ENCODE measurements at regions of chr12 and their contacts with region 1.

Region 1: GRCh38 chr12:76455582-76456345 is 103.8 kb downstream of the OSBPL8 start:
- DNase-seq: peak; percentile 24
- H3K4me3 Mint-ChIP-seq: no peak overlapping the region
- H3K27ac Mint-ChIP-seq: no peak overlapping the region
- H3K4me1 Mint-ChIP-seq: peaks cover 20% of the 10 kb centered on the region
- H3K27me3 Mint-ChIP-seq: no peaks in the 10 kb centered on the region

Region 2: DNA sequence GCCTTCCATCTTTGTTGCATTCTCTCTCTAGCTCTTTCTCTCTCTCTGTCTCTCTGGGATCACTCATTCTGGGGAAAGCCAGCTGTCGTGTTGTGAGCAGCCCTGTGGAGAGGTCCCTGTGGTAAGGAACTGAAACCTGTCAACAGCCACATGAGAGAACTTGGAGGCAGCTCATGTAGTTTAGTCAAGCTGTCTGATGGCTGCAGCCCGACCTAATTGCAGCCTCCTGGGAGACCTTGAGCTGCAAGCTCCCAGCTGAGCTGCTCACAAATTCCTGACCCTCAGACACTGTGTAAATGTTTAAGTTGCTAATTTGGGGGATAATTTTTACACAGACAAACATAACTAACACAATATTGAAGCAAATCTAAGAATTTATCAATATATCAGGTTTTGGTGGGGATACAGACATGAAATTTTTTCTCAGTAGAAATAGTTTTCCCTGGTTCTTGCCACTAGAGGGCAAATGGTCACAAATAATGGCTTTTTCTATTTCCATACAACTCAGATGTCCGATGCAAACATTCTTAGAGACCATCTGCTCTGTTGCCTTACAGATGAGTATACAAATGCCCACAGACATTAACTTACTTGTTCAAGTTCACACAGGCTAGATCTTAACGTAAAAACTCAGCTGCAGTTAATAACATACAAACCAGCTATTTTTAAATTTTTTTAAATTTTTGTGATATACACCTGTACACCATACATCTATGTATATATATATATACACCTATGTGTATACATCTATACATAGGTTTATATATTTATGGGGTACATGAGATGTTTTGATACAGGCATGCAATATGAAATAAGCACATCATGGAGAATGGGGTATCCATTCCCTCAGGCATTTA is 928.9 kb before region 1 on chr12:
- CTCF ChIA-PET with region 1: interaction called, 5 read pairs
- POLR2A ChIA-PET with region 1: no interaction called
- intact Hi-C with region 1: loop called (anchors 5 kb)
- DNase-seq: peak; percentile 21
- H3K4me3 Mint-ChIP-seq: no peak overlapping the region
- H3K27ac Mint-ChIP-seq: no peak overlapping the region
- H3K4me1 Mint-ChIP-seq: peaks cover 6% of the 10 kb centered on the region
- H3K27me3 Mint-ChIP-seq: peaks cover 19% of the 10 kb centered on the region

Region 3: GRCh38 chr12:76266797-76267196 is 189.0 kb before region 1 on chr12:
- CTCF ChIA-PET with region 1: no interaction called
- POLR2A ChIA-PET with region 1: no interaction called
- intact Hi-C with region 1: loop called (anchors 10 kb)
- DNase-seq: no peak
- H3K4me3 Mint-ChIP-seq: no peak overlapping the region
- H3K27ac Mint-ChIP-seq: no peak overlapping the region
- H3K4me1 Mint-ChIP-seq: no peaks in the 10 kb centered on the region
- H3K27me3 Mint-ChIP-seq: peaks cover 21% of the 10 kb centered on the region

Region 4: GRCh38 chr12:76445469-76445868 is 10.3 kb before region 1 on chr12:
- CTCF ChIA-PET with region 1: interaction called, 6 read pairs
- POLR2A ChIA-PET with region 1: no interaction called
- intact Hi-C with region 1: loop called (anchors 1 kb)
- DNase-seq: no peak
- H3K4me3 Mint-ChIP-seq: no peak overlapping the region
- H3K27ac Mint-ChIP-seq: no peak overlapping the region
- H3K4me1 Mint-ChIP-seq: peaks cover 43% of the 10 kb centered on the region
- H3K27me3 Mint-ChIP-seq: no peaks in the 10 kb centered on the region

Region 5: DNA sequence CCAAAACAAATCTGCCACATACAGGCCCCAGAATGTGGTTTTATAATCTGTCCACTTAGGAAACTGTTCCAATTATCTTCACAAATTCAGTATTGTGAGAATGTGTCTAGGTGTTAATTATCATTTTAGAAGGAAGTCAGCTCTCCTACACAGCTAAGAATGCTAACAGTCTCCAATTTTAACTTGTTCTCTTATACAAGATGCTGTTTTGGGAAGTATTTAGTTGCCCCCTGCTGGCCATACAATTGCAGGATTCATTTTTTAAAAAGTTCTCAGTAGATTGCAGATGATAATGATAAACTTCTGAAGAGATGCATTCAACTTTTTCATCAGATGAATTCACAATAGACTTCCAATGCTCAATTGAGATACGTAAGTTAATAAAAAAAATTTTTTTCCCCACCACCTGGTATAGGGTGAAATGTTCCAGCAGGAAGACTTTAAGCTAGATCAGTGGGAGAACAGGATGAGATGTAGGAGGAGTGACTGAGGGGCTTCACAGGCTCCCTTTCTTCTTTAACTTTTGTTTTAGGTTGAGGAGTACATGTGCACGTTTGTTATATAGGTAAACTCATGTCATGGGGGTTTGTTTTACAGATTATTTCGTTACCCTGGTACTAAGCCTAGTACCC is 131.1 kb after region 1 on chr12:
- CTCF ChIA-PET with region 1: no interaction called
- POLR2A ChIA-PET with region 1: no interaction called
- intact Hi-C with region 1: loop called (anchors 5 kb)
- DNase-seq: peak; percentile 18
- H3K4me3 Mint-ChIP-seq: no peak overlapping the region
- H3K27ac Mint-ChIP-seq: no peak overlapping the region
- H3K4me1 Mint-ChIP-seq: peaks cover 1% of the 10 kb centered on the region
- H3K27me3 Mint-ChIP-seq: no peaks in the 10 kb centered on the region